Activated CD4-positive, alpha-beta memory T cell treated with anti-CD3 and anti-CD28 coated beads, Interleukin-2, amount 10 ng/mL, durations not matched to agents 7 days and 5 days (primary cell): ENCODE measurements at regions of chr16 and their contacts with region 1.

Region 1: DNA sequence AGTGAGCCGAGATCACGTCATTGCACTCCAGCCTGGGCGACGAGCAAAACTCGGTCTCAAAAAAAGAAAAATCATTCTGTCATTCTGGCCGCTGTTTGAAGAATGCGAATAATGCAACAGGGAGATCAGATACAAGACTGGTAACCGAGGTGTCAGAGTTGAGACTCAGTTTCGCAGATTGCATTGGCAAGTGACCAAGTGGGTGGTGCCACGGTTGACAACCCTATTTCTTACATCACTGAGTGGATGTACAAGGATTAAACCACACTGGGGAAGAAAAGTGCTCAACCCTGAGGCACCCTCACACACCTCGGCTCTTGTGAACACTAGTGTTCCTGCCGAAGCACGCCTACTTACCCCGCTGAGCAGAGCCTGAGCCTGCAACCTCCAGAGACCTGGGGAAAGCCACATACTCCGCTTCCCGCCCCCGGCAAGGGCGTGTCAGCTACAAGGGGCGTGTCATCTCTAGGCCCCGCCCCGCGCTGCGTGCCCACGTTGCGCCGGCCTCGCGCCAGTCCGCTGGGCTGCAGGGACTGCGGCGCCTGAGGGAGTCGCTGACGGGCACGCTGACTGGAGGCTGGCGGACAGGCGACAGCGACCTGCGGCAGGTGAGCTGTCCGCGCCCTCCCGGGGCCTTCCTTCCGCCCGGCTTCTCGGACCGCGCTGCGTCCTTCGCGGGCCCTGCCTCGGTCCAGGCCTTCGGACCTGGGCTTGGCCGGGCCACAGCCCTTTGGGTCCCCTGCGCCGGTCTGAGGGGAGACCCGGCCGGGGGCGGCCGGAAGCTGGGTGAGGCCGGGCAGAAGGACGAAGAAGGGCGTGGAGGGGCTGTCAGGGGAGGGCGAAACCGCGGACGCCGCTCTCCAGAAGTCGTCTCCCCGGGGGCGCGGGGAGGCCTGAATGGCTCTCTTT is at the start of gene HMOX2:
- DNase-seq: peak; percentile 96
- H3K4me3 Mint-ChIP-seq: peak within 1 kb of the TSS; percentile 91
- H3K27ac Mint-ChIP-seq: peak within 1 kb of the TSS; percentile 93
- H3K4me1 Mint-ChIP-seq: peaks cover 43% of the 10 kb centered on the region
- H3K27me3 Mint-ChIP-seq: no peaks in the 10 kb centered on the region
- total RNA-seq, gene HMOX2: 77.4 to 83.4 TPM

Region 2: GRCh38 chr16:4460936-4461249 is 15.2 kb before region 1 on chr16:
- CTCF ChIA-PET with region 1: interaction called, 8 read pairs
- POLR2A ChIA-PET with region 1: interaction called, 57 read pairs
- DNase-seq: no peak
- H3K4me3 Mint-ChIP-seq: no peak overlapping the region
- H3K27ac Mint-ChIP-seq: peak overlapping the region; percentile 60
- H3K4me1 Mint-ChIP-seq: peaks cover 30% of the 10 kb centered on the region
- H3K27me3 Mint-ChIP-seq: no peaks in the 10 kb centered on the region

Region 3: DNA sequence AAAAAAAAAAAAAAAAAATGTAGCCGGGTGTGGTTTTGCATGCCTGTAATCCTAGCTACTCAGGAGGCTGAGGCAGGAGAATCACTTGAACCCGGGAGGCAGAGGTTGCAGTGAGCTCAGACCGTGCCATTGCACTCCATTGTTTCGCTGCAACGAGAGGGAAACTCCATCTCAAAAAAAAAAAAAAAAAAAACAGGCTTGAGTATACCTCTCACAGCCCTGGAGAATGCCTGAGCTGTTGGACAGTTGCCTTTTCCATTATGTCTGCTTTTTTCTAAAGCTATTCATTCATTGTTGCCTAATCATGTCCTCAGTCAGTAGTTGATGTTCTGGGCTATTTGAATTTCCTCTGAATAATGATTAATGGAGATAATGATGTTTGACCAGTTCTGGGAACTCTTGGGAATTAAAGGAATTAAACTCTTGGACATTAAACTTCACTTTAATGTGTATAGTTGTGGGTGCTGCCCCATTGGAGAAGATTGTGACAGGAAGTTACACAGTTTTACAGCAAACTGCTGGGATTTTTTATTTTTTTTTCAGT is 11.9 kb after region 1 on chr16:
- CTCF ChIA-PET with region 1: interaction called, 35 read pairs
- POLR2A ChIA-PET with region 1: interaction called, 77 read pairs
- DNase-seq: no peak
- H3K4me3 Mint-ChIP-seq: peak overlapping the region; percentile 55
- H3K27ac Mint-ChIP-seq: peak overlapping the region; percentile 97
- H3K4me1 Mint-ChIP-seq: peaks cover 47% of the 10 kb centered on the region
- H3K27me3 Mint-ChIP-seq: no peaks in the 10 kb centered on the region

Region 4: DNA sequence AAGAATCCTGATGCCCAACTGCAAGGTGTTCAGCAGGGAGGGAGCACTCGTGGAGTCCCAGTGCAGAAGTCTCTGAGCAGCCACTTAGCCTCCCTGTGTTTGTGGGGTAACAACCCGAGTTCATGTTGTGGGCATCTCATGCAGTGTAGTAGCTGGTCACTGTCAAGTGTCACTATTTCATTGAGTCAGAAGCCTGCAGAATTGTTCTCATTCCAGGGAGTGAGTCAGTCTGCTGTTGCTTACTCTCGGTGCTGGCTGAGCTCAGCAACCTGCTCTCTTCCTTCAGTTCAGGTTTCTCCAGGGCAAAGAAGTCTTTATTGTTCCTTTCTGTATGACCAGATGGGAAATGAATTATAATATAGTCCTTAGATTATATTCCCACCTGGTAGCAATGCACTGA is 24.1 kb after region 1 on chr16:
- CTCF ChIA-PET with region 1: interaction called, 102 read pairs
- POLR2A ChIA-PET with region 1: interaction called, 154 read pairs
- DNase-seq: no peak
- H3K4me3 Mint-ChIP-seq: no peak overlapping the region
- H3K27ac Mint-ChIP-seq: no peak overlapping the region
- H3K4me1 Mint-ChIP-seq: peaks cover 64% of the 10 kb centered on the region
- H3K27me3 Mint-ChIP-seq: no peaks in the 10 kb centered on the region

Region 5: DNA sequence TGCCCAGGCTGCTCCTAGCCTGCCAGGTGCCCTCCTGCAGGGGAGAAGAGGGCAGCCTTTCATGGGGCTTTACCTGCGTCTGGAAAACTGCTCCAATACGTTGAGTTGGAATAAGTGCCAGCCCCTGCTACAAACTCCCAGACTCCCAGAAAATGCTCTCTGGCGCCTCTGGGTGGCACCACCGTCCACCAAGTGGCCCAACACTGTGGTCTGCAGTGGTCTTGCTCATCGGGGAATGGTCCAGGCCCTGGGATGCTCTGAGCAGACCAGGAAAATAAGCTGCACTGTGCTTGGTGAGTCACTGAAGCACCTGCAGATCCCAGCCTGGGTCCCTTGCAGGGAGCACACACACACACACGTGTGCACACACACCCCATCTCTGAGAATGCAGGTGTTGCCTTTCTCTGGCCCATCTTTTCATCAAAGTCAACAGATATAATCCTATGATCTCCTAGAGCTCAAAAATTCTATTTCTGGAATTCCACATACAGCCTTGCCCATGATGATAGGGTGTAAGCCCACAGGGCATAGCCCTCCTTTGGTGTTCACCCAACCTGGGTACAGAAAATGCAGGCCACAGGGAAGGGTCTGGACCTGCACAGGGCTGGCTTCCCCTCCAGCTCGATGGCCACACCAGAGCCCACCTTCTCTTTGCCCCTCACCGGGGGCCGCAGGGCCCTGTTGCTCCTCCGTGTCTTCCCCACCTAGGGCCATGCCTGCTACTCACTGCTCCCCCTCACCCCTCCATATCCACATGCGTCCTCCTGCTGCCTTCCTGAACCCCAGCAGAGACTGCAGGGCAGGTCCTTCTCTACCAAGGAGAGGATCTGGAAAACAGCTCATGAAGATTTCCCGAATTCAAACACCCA is 41.9 kb after region 1 on chr16:
- CTCF ChIA-PET with region 1: interaction called, 3 read pairs
- POLR2A ChIA-PET with region 1: interaction called, 23 read pairs
- DNase-seq: no peak
- H3K4me3 Mint-ChIP-seq: no peak overlapping the region
- H3K27ac Mint-ChIP-seq: no peak overlapping the region
- H3K4me1 Mint-ChIP-seq: peaks cover 41% of the 10 kb centered on the region
- H3K27me3 Mint-ChIP-seq: no peaks in the 10 kb centered on the region

Region 6: GRCh38 chr16:4574919-4575705 is 99.0 kb after region 1 on chr16:
- CTCF ChIA-PET with region 1: no interaction called
- POLR2A ChIA-PET with region 1: no interaction called
- DNase-seq: no peak
- H3K4me3 Mint-ChIP-seq: no peak overlapping the region
- H3K27ac Mint-ChIP-seq: no peak overlapping the region
- H3K4me1 Mint-ChIP-seq: peaks cover 8% of the 10 kb centered on the region
- H3K27me3 Mint-ChIP-seq: no peaks in the 10 kb centered on the region